ENCODE measurements at regions of chr11 and their contacts with region 1.

Region 1: DNA sequence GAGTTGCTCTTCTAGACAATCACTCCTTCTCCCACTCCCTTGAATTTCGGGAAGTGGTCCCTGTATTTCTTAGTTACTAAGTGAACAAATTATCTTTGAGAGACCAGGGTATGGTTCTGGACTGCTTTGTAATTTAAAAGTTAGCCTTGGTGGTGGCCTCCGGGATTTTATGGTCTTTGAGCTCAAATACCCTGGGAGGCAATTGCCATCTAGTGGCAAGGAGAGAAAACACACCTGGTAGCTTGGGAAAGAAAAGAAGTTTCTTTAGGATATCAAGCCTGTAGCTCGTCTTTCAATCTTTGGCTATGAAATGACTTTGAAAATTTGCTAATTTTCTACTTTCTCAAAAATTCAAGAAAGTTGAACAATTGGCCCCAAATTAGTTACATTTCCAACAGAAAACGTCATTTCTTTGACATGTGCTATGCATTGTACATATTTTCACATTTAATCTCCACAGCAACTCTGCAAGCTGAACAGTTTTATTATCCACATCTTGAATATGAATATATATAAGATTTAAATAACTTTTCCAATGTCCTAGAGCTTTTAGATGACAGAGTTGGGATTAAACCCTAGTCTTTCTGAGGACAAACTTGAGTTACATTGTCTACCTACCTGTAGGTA is 39.1 kb downstream of the MMP27 start:
- DNase-seq: no peak
- ATAC-seq: no peak
- H3K4me3 ChIP-seq: no peak overlapping the region
- H3K27ac ChIP-seq: no peak overlapping the region
- H3K4me1 ChIP-seq: no peaks in the 10 kb centered on the region
- H3K27me3 ChIP-seq: no peaks in the 10 kb centered on the region
- CTCF ChIP-seq: peak; percentile 37 to 74 (median 60)
- POLR2A ChIP-seq: no peak

Region 2: GRCh38 chr11:102287964-102288724 is 378.3 kb before region 1 on chr11:
- intact Hi-C with region 1: loop called in 3 of 10 experiments (anchors 5 to 10 kb)
- DNase-seq: peak in 3 of 5 donors; percentile 23 to 31 (median 28)
- ATAC-seq: peak; percentile 78 to 92 (median 82)
- H3K4me3 ChIP-seq: peak overlapping the region in 8 of 12 donors; percentile 10 to 42 (median 28)
- H3K27ac ChIP-seq: no peak overlapping the region
- H3K4me1 ChIP-seq: peaks cover 0 to 23% (median 0%) of the 10 kb centered on the region in 12 donors
- H3K27me3 ChIP-seq: no peaks in the 10 kb centered on the region
- CTCF ChIP-seq: peak; percentile 66 to 84 (median 76)
- POLR2A ChIP-seq: no peak

Region 3: GRCh38 chr11:102293873-102294601 is 372.4 kb before region 1 on chr11:
- intact Hi-C with region 1: loop called in 3 of 10 experiments (anchors 5 to 10 kb)
- DNase-seq: no peak
- ATAC-seq: peak in 3 of 4 donors; percentile 44 to 75 (median 44)
- H3K4me3 ChIP-seq: peak overlapping the region in 2 of 12 donors; percentile 7 to 41
- H3K27ac ChIP-seq: no peak overlapping the region
- H3K4me1 ChIP-seq: peaks cover 0 to 34% (median 0%) of the 10 kb centered on the region in 12 donors
- H3K27me3 ChIP-seq: no peaks in the 10 kb centered on the region
- CTCF ChIP-seq: peak; percentile 21 to 70 (median 58)
- POLR2A ChIP-seq: no peak

Region 4: DNA sequence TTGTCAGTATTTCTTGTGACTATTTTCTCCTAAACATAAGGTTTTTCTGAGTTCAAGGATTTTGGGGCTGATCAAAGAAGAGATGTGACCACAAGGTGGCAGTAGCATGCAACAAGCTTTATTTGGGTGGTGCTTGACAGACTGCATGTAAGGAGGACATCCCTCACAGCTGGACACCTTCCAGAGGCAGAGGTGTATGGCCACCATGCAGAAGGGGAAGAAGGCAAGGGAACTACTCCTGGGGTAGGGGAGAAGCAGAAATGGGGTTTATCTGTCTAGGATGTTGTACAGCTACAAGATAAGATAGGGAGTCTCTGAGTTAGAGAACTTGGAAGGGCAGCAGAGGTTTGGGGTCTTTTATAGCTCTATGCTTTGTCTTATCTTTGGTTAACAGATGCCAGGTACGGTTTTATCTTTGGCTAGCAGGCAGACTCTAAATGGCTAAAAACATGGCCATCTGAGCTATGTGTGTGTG is 324.6 kb before region 1 on chr11:
- intact Hi-C with region 1: loop called in 4 of 10 experiments (anchors 5 to 10 kb)
- DNase-seq: peak in 4 of 5 donors; percentile 72 to 77 (median 74)
- ATAC-seq: peak in 3 of 4 donors; percentile 56 to 74 (median 66)
- H3K4me3 ChIP-seq: no peak overlapping the region
- H3K27ac ChIP-seq: no peak overlapping the region
- H3K4me1 ChIP-seq: peaks cover 0 to 9% (median 7%) of the 10 kb centered on the region in 12 donors
- H3K27me3 ChIP-seq: no peaks in the 10 kb centered on the region
- CTCF ChIP-seq: peak; percentile 65 to 86 (median 80)
- POLR2A ChIP-seq: no peak

Region 5: DNA sequence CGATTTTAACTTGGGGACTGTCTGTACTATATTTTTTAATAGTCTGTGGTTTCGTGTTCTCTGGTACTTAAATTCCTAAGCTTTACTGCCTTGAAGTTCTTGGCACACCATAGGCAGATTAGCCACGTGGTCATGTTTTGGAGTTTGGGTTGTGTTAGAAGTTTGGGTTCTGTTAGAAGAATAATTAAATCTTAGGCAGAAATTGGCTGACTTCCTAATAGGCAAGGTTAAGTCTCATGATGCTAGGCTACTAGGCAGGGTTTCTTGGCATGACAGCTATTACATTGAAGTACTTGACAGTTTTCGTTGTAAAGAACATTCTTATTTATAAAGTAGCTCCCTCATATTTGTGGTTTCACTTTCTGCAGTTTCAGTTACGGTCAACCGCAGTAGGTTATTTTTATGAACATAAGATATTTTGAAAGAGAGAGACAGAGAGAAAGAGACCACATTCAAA is 105.9 kb before region 1 on chr11:
- intact Hi-C with region 1: no loop called
- DNase-seq: no peak
- ATAC-seq: no peak
- H3K4me3 ChIP-seq: peak overlapping the region in 8 of 12 donors; percentile 10 to 50 (median 30)
- H3K27ac ChIP-seq: peak overlapping the region in 2 of 12 donors; percentile 30 to 58
- H3K4me1 ChIP-seq: peaks cover 0 to 18% (median 0%) of the 10 kb centered on the region in 12 donors
- H3K27me3 ChIP-seq: no peaks in the 10 kb centered on the region
- CTCF ChIP-seq: no peak
- POLR2A ChIP-seq: no peak

Region 6: DNA sequence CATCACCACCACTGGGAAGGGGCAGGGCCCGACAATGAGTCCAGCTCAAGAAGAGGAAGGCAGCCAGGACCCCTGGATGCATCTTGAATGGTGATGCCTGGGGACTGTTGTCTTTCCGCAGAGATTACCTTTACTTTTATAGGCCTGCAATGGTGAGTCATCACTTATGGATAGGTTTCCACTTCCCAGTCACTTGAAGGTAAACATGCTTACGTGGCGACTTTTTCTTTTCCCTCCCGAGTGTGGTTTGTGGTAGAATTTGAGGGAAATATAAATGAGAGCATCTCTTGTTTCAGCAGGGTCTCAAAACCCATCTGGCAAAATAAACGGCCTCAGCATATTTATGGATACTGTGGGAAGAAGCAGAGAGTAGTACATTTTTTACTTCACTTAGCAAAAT is 289.2 kb after region 1 on chr11 and contains the start of gene MMP13:
- intact Hi-C with region 1: no loop called
- DNase-seq: no peak
- ATAC-seq: no peak
- H3K4me3 ChIP-seq: no peak within 1 kb of the TSS
- H3K27ac ChIP-seq: no peak within 1 kb of the TSS
- H3K4me1 ChIP-seq: no peaks in the 10 kb centered on the region
- H3K27me3 ChIP-seq: no peaks in the 10 kb centered on the region
- CTCF ChIP-seq: no peak
- POLR2A ChIP-seq: no peak
- total RNA-seq, gene MMP13: not detected